ENCODE measurements at regions of chr7 and their contacts with region 1.

Region 1: GRCh38 chr7:40232242-40232893 is 97.6 kb downstream of the SUGCT start:
- DNase-seq: peak in 1 of 2 experiments; percentile 42
- H3K4me3 ChIP-seq: no peak overlapping the region
- H3K4me3 Mint-ChIP-seq: no peak overlapping the region
- H3K27ac Mint-ChIP-seq: no peak overlapping the region
- H3K4me1 ChIP-seq: peaks cover 7% of the 10 kb centered on the region; the same call in 1 of the 2 replicates
- H3K4me1 Mint-ChIP-seq: no peaks in the 10 kb centered on the region
- H3K27me3 ChIP-seq: no peaks in the 10 kb centered on the region
- H3K27me3 Mint-ChIP-seq: no peaks in the 10 kb centered on the region
- CTCF ChIP-seq: peak; percentile 52 to 60

Region 2: GRCh38 chr7:40474790-40475680 is 242.7 kb after region 1 on chr7:
- CTCF ChIA-PET with region 1: no interaction called
- POLR2A ChIA-PET with region 1: no interaction called
- intact Hi-C with region 1: no loop called
- DNase-seq: no peak
- H3K4me3 ChIP-seq: no peak overlapping the region
- H3K4me3 Mint-ChIP-seq: no peak overlapping the region
- H3K27ac Mint-ChIP-seq: no peak overlapping the region
- H3K4me1 ChIP-seq: peaks cover 9% of the 10 kb centered on the region
- H3K4me1 Mint-ChIP-seq: peaks cover 9% of the 10 kb centered on the region
- H3K27me3 ChIP-seq: no peaks in the 10 kb centered on the region
- H3K27me3 Mint-ChIP-seq: no peaks in the 10 kb centered on the region
- CTCF ChIP-seq: no peak

Region 3: DNA sequence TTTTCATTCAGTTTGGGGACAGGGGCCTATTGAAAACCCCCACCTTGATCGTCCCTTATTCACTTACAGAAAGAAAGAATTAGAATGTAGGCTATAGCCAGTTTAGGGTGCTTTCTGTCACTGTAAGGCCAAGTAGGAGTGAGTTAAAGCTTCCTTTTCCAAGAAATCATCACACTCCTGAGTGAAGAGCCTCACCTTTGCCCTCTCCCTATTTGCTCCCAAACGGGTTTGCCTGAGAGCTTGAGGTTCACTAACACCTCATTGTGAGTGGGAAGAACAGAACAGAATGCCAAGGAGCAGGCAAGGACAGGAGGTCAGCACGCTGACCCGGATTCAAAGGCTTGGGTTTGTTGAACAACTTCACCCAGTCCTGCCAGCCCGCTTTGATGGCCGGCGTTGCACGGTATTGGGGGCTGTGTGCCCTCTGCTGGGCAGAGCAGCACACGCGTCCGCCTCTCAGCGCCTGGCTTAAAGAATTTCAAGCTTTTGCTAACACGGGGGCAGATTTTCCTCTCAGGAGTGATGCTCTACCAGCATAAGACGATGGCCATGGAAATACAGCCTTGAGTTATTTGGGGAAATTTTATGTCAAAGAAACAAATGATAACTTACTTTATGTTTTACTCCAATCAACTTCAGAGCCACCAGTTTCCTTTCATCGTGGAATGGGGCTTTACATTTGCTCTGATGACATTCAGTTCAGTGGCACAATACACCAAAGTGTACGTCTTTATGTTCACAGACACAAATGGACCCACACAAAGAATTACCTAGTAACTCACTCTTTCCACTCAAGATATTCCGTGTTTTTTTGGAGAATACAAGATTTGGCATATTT is 372.5 kb after region 1 on chr7:
- CTCF ChIA-PET with region 1: no interaction called
- POLR2A ChIA-PET with region 1: no interaction called
- intact Hi-C with region 1: loop called (anchors 10 kb)
- DNase-seq: peak; percentile 45 to 47
- H3K4me3 ChIP-seq: no peak overlapping the region
- H3K4me3 Mint-ChIP-seq: no peak overlapping the region
- H3K27ac Mint-ChIP-seq: no peak overlapping the region
- H3K4me1 ChIP-seq: peaks cover 3% of the 10 kb centered on the region; the same call in 1 of the 2 replicates
- H3K4me1 Mint-ChIP-seq: no peaks in the 10 kb centered on the region
- H3K27me3 ChIP-seq: no peaks in the 10 kb centered on the region
- H3K27me3 Mint-ChIP-seq: no peaks in the 10 kb centered on the region
- CTCF ChIP-seq: peak; percentile 63 to 68

Region 4: GRCh38 chr7:40978047-40978446 is 745.7 kb after region 1 on chr7:
- CTCF ChIA-PET with region 1: no interaction called
- POLR2A ChIA-PET with region 1: no interaction called
- intact Hi-C with region 1: no loop called
- DNase-seq: no peak
- H3K4me3 ChIP-seq: no peak overlapping the region
- H3K4me3 Mint-ChIP-seq: no peak overlapping the region
- H3K27ac Mint-ChIP-seq: no peak overlapping the region
- H3K4me1 ChIP-seq: no peaks in the 10 kb centered on the region
- H3K4me1 Mint-ChIP-seq: no peaks in the 10 kb centered on the region
- H3K27me3 ChIP-seq: no peaks in the 10 kb centered on the region
- H3K27me3 Mint-ChIP-seq: no peaks in the 10 kb centered on the region
- CTCF ChIP-seq: no peak

Region 5: DNA sequence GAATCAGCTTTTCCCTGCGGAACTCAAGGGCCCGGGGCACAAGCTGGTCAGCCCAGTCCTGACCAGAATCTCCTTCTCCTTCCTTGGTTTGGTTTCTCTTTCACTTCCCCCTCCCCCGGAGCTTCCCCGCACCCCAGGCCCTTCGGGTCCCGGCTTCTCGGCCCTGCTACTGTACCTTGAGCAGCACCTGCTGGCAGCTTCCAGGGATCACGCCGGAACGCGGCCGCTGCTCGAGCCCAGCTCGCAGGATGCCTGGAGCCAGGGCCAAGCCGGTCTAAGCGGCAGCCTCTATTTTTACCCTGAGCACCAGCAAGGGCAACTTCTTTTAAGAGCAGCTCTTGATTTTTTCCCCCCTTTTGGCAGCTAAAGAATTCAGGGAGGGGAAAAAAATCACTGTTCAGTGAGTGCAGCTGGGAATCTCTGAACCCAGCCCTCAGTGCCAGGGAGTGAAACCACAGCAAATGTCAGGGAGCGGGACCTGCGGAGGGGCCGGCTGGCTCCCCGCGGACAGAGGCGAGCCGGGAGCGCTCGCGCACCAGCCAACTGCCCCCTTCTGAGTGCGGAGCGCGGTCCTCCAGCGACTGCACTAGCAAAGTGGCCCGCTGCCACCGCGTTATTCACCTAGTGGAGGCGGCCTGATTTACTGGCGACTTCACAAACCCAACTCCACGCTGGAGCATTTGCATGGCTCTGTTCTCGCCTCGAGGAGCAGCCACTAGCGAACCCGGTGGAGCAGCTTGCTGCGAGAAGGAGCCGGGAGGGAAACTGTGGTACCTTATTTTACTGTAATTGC is 1472.9 kb after region 1 on chr7:
- CTCF ChIA-PET with region 1: interaction called, 7 read pairs
- POLR2A ChIA-PET with region 1: no interaction called
- intact Hi-C with region 1: loop called (anchors 2 kb)
- DNase-seq: peak; percentile 90 to 91
- H3K4me3 ChIP-seq: peak overlapping the region; percentile 43
- H3K4me3 Mint-ChIP-seq: peak overlapping the region; percentile 78
- H3K27ac Mint-ChIP-seq: no peak overlapping the region
- H3K4me1 ChIP-seq: no peaks in the 10 kb centered on the region
- H3K4me1 Mint-ChIP-seq: peaks cover 14% of the 10 kb centered on the region
- H3K27me3 ChIP-seq: no peaks in the 10 kb centered on the region
- H3K27me3 Mint-ChIP-seq: peaks cover 3% of the 10 kb centered on the region
- CTCF ChIP-seq: peak; percentile 79 to 94

Region 6: DNA sequence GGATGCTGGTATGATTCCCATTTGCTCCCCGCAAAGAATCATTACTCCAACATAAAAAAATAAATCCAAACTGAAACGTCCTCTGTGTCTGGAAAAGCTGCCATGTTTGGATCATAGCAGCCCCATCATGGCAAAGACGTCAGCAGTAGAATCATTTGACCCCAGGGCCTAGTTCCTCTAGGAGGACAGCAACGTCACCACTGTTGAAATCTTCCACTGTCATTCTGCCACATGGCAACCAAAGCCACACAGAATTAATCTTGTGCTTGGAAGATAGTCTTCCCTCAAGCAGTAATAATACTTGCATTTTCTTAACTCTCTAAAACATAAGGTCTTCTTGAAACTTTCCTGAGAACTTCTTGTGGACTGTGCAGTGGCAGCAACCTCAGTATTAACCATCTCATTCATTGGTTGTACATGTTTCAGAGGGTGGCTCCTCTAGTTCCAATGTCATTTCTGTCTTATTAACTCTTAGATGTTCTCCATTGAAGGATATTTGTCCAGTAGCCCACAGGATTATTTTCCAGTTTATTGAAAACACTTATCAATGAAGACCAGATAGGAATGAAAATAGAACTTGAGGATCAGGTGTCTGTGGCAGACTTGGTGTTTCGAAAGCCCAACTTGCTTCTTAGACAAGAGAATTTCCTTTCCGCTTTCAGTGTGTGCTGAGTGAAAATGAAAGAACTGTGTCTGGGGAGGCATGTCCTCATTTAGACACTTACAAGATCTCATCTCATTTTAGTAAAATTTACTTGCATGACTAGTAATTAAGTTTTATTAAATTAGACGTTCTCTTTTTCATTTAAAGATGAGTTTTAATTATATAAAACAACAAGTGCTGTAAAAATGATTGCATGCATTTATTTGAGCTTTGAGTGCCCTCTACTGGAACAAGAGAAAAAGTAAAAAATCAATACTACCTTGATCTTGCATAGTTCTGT is 1499.4 kb after region 1 on chr7:
- CTCF ChIA-PET with region 1: no interaction called
- POLR2A ChIA-PET with region 1: no interaction called
- intact Hi-C with region 1: loop called (anchors 2 kb)
- DNase-seq: no peak
- H3K4me3 ChIP-seq: no peak overlapping the region
- H3K4me3 Mint-ChIP-seq: no peak overlapping the region
- H3K27ac Mint-ChIP-seq: no peak overlapping the region
- H3K4me1 ChIP-seq: no peaks in the 10 kb centered on the region
- H3K4me1 Mint-ChIP-seq: peaks cover 7% of the 10 kb centered on the region
- H3K27me3 ChIP-seq: no peaks in the 10 kb centered on the region
- H3K27me3 Mint-ChIP-seq: peaks cover 7% of the 10 kb centered on the region
- CTCF ChIP-seq: peak in 1 of 2 experiments; percentile 55